HEK293 (cell line): ENCODE measurements at regions of chr12 and their contacts with region 1.

Region 1: DNA sequence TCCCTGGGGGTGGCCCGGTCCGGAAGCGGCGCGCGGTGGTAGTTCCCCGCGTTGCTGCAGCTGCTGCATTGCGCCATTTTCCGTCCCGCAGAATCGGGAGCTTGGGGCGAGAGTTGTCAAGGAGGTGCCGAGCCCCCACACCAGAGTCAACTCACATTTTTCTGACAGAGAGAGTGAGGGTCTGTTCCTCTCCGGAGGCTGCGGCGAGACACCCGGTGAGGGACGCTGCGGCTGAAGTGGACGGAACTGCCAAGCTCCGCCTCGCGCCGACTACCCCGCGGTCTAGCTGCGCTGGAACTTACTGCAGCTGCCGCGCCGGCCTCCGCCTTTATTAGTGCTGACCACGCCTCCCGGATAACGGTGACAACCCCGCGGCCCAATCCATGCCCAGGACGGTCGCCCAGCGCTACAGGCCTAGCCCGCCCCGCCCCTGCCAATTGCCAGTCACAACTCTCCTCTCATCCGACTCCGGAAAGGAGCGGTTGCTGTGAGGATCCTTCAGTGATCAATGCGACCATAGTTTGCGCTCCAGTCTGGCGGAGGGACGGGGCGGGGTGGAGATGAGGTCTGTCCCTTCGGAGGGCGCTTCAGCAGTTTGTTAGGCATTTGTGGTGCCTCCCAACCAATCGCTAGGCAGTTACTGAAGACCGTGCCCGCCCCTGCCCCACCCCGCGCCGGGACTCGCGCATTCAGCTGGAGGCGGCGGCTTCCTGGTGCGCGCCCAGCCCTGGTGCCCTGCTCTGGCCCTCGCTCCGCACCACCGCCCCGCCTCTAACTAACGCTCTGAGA is at the start of gene VAMP1:
- H3K4me3 ChIP-seq: peak within 1 kb of the TSS; percentile 81
- H3K27ac ChIP-seq: peak within 1 kb of the TSS; percentile 35
- H3K4me1 ChIP-seq: peaks cover 2% of the 10 kb centered on the region; the same call in 1 of the 2 replicates
- CTCF ChIP-seq: peak; percentile 42

Region 2: GRCh38 chr12:6157482-6157881 is 313.1 kb before region 1 on chr12:
- CTCF ChIA-PET with region 1: no interaction called
- POLR2A ChIA-PET with region 1: no interaction called
- H3K4me3 ChIP-seq: no peak overlapping the region
- H3K27ac ChIP-seq: no peak overlapping the region
- H3K4me1 ChIP-seq: no peaks in the 10 kb centered on the region
- CTCF ChIP-seq: no peak

Region 3: GRCh38 chr12:6335451-6336078 is 135.0 kb before region 1 on chr12:
- CTCF ChIA-PET with region 1: interaction called, 28 read pairs
- POLR2A ChIA-PET with region 1: interaction called, 18 read pairs
- H3K4me3 ChIP-seq: peak overlapping the region; percentile 28
- H3K27ac ChIP-seq: peak overlapping the region; percentile 90
- H3K4me1 ChIP-seq: peaks cover 27% of the 10 kb centered on the region
- CTCF ChIP-seq: peak; percentile 77

Region 4: GRCh38 chr12:6423267-6424007 is 47.1 kb before region 1 on chr12:
- CTCF ChIA-PET with region 1: interaction called, 73 read pairs
- POLR2A ChIA-PET with region 1: interaction called, 3 read pairs
- H3K4me3 ChIP-seq: no peak overlapping the region
- H3K27ac ChIP-seq: no peak overlapping the region
- H3K4me1 ChIP-seq: no peaks in the 10 kb centered on the region
- CTCF ChIP-seq: peak; percentile 82

Region 5: GRCh38 chr12:6488240-6488639 is 17.7 kb after region 1 on chr12:
- CTCF ChIA-PET with region 1: interaction called, 7 read pairs
- POLR2A ChIA-PET with region 1: interaction called, 74 read pairs
- H3K4me3 ChIP-seq: no peak overlapping the region
- H3K27ac ChIP-seq: no peak overlapping the region
- H3K4me1 ChIP-seq: peaks cover 4% of the 10 kb centered on the region; the same call in 1 of the 2 replicates
- CTCF ChIP-seq: no peak

Region 6: DNA sequence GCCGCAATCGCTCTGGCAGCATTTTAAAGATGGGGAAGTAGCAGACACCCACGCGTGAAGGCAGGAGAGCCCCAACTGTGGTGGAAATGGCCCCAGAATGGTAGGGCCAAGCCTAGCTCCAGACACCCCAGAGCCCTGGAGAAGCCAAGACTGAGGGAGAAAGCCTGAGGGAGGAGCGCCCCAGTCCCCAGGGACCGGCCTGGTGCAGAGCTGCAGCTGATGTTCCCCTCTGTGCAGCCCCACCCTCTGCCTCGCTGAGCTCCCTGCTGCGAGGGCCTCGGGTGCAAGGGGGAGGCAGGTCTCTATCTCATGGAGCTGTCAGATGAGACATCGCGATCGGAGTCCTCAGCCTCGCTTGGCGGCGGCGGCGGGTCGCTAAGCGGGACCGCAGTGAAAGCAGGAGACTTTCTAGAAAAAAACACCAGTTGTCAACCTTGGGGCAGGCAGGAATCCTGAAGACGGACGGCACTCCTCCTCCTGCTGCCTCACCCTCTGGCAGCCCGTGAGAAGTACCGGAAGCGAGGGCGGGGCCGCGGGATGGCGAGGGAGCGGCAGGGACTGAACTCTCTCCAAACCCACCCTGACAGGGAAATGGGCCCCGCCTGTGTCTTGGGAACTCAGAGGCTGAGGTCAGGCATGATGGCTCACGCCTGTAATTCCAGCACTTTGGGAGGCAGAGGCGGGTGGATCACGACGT is 69.8 kb after region 1 on chr12:
- CTCF ChIA-PET with region 1: interaction called, 13 read pairs
- POLR2A ChIA-PET with region 1: interaction called, 50 read pairs
- H3K4me3 ChIP-seq: no peak overlapping the region
- H3K27ac ChIP-seq: peak overlapping the region; percentile 38; the same call in 1 of the 2 replicates
- H3K4me1 ChIP-seq: peaks cover 4% of the 10 kb centered on the region; the same call in 1 of the 2 replicates
- CTCF ChIP-seq: no peak

Region 7: DNA sequence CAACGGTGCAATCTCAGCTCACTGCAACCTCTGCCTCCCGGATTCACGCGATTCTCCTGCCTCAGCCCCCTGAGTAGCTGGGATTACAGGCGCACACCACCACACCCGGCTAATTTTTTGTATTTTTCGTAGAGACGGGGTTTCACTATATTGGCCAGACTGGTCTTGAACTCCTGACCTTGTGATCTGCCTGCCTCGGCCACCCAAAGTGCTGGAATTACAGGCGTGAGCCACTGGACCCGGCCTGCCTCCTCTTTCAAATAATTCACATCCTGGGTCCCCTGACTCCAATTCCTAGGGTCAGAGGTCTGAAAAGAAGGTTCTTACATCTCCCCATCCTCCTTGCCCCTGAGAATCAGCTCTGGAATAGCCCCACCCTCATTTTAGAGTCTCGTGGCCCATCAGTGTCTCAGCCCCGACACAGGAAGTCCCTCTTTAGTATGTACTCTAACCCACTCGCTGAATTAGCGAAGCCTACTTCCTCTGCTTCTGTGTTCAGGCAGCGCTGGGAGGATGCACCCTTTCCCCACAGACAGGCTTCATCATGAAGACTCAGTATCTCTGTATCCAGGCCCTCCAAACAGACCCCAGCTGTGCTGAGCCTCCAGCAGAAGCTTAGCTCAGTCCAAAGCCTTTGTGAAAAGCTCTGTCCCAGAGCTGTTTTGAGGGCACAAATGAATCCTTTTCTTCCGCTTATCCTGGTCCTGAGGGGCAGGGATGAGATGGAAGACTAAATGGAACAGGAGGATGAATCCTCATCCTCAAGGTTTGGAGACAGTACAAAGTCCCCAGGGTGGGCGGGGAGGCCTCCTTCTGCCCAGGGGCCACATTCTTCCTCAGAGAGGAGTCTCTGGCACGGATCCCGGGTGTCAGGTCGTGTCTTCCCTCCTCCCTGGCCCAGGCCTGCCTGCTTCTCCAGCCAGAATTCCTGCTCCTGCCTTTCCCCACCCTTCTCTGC is 161.7 kb after region 1 on chr12:
- CTCF ChIA-PET with region 1: no interaction called
- POLR2A ChIA-PET with region 1: no interaction called
- H3K4me3 ChIP-seq: no peak overlapping the region
- H3K27ac ChIP-seq: no peak overlapping the region
- H3K4me1 ChIP-seq: peaks cover 3% of the 10 kb centered on the region; the same call in 1 of the 2 replicates
- CTCF ChIP-seq: no peak

Region 8: DNA sequence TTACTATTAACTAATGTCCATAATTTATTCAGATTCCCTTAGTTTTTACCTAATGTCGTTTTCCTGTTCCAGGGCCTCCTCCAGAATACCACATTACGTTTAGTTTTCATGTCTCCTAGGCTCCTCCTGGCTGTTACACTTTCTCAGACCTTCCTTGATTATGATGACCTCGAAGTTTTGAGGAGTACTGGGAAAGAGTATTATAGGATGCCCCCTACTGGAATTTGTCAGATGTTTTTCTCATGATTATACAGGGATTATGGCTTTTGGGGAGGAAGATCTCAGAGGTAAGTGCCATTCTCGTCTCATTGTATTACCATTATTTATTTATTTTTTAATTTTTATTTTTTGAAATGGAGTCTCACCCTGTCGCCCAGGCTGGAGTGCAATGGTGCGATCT is 572.3 kb after region 1 on chr12:
- CTCF ChIA-PET with region 1: no interaction called
- POLR2A ChIA-PET with region 1: no interaction called
- H3K4me3 ChIP-seq: no peak overlapping the region
- H3K27ac ChIP-seq: no peak overlapping the region
- H3K4me1 ChIP-seq: 0 out of 2 replicates have a peak, but pooled peaks cover 3% of the 10 kb centered on the region
- CTCF ChIP-seq: no peak